Endothelial cell of umbilical vein (primary cell): ENCODE measurements at regions of chr1 and their contacts with region 1.

Region 1: DNA sequence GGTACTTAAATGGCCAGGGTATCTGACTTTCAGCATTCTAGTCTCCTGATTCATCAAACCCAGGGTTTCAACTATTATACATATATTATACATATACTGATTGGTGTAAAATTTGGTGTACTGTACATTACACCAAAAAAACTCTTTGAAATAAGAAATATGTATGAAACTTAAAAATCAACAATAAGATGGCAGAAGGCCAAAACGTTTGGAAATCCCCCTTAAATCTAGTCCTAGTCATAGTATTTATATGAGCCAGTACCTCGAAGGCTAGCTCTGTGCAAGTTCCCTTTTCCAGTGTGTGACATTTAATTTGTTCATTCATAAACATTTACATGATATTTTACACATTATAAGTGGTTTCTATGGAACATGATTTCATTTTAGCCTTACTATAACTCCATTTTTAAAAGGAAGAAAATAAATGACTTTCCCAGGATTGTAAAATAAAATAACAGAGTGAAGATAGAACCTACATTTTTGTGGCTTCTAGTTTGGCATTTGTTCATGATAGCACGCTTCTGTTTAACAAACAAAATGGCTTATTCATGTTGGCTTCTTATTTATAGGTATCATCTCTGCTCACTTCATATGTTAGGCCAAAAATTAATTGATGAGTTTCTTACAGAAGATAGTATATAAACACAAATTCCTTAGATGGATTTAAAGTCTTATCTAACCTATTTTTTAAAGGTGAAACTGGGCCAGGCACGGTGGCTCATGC is 18.8 kb upstream of the ZNF281 start:
- DNase-seq: peak; percentile 15
- H3K4me3 ChIP-seq: no peak overlapping the region
- H3K27ac ChIP-seq: no peak overlapping the region
- H3K4me1 ChIP-seq: no peaks in the 10 kb centered on the region
- H3K27me3 ChIP-seq: no peaks in the 10 kb centered on the region
- CTCF ChIP-seq: no peak
- POLR2A ChIP-seq: no peak

Region 2: GRCh38 chr1:200184196-200184595 is 244.4 kb before region 1 on chr1:
- CTCF ChIA-PET with region 1: no interaction called
- POLR2A ChIA-PET with region 1: no interaction called
- dilution Hi-C with region 1: no loop called
- intact Hi-C with region 1: no loop called
- DNase-seq: peak; percentile 73
- H3K4me3 ChIP-seq: no peak overlapping the region
- H3K27ac ChIP-seq: no peak overlapping the region
- H3K4me1 ChIP-seq: peaks cover 19% of the 10 kb centered on the region
- H3K27me3 ChIP-seq: no peaks in the 10 kb centered on the region
- CTCF ChIP-seq: no peak
- POLR2A ChIP-seq: no peak

Region 3: DNA sequence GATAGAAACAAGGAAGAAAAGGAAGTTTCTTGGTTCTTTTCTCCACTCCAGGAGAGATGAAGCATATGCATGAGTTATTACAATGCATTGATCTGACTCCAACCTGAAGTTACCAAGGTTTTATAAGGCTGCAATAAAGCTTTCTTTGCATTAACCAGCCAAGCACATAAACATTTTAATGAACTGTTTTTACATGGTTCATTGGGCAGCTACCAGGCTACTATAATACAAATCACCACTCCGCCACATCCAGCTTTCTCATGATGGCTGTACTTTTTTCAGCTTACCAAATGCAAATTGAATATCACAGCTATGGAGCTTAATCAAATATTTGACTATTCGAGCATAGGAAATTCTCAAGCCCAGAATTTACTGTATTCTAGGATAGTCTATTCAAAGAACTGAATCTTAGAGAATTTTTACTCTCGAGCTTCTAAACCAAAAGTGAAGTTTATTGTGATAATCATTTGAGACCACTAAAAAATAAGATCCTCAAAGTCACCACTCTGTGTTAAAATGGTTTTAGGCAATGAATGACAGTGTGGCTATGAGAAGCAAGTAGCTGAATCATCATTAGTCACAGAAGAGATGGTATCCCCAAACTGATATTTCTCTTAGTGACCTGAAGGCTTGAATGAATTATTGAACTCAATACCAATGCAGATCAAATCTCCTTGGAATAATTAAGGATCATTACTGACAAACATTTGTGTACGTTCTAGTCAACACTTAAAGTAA is 39.8 kb after region 1 on chr1:
- CTCF ChIA-PET with region 1: no interaction called
- POLR2A ChIA-PET with region 1: no interaction called
- dilution Hi-C with region 1: no loop called
- intact Hi-C with region 1: loop called (anchors 5 kb)
- DNase-seq: no peak
- H3K4me3 ChIP-seq: no peak overlapping the region
- H3K27ac ChIP-seq: no peak overlapping the region
- H3K4me1 ChIP-seq: no peaks in the 10 kb centered on the region
- H3K27me3 ChIP-seq: peaks cover 0 to 3% of the 10 kb centered on the region in 2 experiments
- CTCF ChIP-seq: no peak
- POLR2A ChIP-seq: no peak